ENCODE measurements at regions of chr5 and their contacts with region 1.

Region 1: GRCh38 chr5:81165493-81166119 is 67.5 kb upstream of the CKMT2 start:
- DNase-seq: peak; percentile 51
- H3K4me3 ChIP-seq: no peak overlapping the region
- H3K27ac ChIP-seq: no peak overlapping the region
- H3K4me1 ChIP-seq: no peaks in the 10 kb centered on the region
- H3K27me3 ChIP-seq: no peaks in the 10 kb centered on the region
- CTCF ChIP-seq: peak; percentile 68 to 78
- POLR2A ChIP-seq: no peak

Region 2: DNA sequence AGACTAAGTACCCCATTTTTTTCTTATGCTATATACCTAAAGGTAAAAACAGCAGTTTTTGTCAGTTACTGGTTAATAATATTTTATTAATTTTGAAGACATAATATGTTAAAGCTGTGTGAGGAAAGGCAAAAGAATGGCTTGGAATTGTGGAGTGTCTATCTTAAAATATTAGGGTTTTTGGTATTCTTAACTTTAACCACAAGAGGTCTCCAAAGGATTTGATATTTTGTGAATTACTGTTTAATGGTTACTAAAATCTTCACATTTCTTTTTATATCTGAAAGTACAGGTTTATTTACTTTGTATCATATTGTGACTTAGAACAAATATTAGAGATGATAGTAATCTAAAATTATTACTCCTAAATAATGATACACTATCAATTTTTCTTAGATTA is 478.8 kb before region 1 on chr5:
- CTCF ChIA-PET with region 1: interaction called, 46 read pairs
- POLR2A ChIA-PET with region 1: no interaction called
- dilution Hi-C with region 1: no loop called
- intact Hi-C with region 1: loop called (anchors 1 kb)
- DNase-seq: peak; percentile 27
- H3K4me3 ChIP-seq: no peak overlapping the region
- H3K27ac ChIP-seq: no peak overlapping the region
- H3K4me1 ChIP-seq: no peaks in the 10 kb centered on the region
- H3K27me3 ChIP-seq: no peaks in the 10 kb centered on the region
- CTCF ChIP-seq: peak; percentile 1 to 14
- POLR2A ChIP-seq: no peak

Region 3: DNA sequence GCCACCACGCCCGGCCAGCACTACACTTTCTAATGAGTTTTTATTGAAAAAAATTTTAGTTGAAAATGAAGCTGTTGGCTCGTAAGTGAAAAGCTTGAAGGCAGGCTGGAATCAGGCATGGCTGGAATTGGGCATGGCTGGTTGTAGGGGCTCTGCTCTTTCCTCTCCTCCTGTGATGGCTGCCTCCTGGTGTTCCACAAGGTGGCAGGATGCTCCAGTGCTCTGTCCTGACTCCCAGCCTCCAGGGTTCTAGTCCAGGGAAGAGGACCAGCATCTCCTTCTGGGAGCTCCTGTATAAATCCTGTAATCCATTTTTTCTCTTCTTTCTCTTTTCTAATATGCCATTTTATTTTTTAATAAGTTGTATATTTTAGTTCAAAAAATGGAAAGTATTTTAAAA is 453.7 kb before region 1 on chr5:
- CTCF ChIA-PET with region 1: interaction called, 3 read pairs
- POLR2A ChIA-PET with region 1: no interaction called
- dilution Hi-C with region 1: no loop called
- intact Hi-C with region 1: loop called (anchors 1 kb)
- DNase-seq: no peak
- H3K4me3 ChIP-seq: no peak overlapping the region
- H3K27ac ChIP-seq: no peak overlapping the region
- H3K4me1 ChIP-seq: peaks cover 6% of the 10 kb centered on the region
- H3K27me3 ChIP-seq: no peaks in the 10 kb centered on the region
- CTCF ChIP-seq: peak in 1 of 2 donors; percentile 57
- POLR2A ChIP-seq: no peak

Region 4: DNA sequence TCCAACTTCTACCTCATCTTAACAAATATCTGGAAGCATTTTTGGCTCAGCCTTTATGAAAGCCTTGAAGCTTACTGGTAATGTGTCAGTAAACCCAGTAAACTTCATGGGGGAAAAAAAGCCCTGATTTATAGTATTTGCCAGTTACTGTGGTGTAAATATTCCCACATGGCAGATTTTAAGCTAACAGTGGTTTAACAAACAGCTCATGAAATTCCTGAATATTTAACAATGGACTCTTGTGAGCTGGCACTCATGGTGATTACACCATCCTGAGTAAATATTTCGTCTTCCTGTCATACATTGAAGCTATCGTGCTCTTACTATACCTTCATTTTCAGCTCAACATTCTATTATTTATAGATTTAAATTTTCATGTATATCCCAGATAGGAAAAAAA is 285.3 kb after region 1 on chr5:
- CTCF ChIA-PET with region 1: no interaction called
- POLR2A ChIA-PET with region 1: no interaction called
- dilution Hi-C with region 1: no loop called
- intact Hi-C with region 1: no loop called
- DNase-seq: peak; percentile 24
- H3K4me3 ChIP-seq: no peak overlapping the region
- H3K27ac ChIP-seq: no peak overlapping the region
- H3K4me1 ChIP-seq: no peaks in the 10 kb centered on the region
- H3K27me3 ChIP-seq: no peaks in the 10 kb centered on the region
- CTCF ChIP-seq: no peak
- POLR2A ChIP-seq: no peak

Region 5: DNA sequence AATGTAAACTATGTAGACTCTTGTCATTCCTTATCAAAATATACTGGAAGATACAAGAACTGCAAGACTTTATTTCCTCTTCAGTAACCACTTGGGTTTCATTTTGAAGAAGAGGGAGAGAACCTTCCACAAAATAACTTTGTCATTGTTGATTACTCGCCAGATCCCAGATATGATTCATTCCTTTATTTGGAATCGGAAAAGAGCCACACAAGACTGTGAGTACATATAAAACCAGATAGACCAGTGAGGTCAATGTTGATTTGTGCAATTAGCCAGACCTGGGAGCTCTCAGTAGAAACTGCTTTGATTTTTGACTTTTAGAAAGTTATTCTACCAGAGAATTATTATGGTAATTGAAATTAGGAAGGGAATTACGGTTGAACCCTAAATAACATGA is 1765.5 kb after region 1 on chr5:
- CTCF ChIA-PET with region 1: no interaction called
- POLR2A ChIA-PET with region 1: no interaction called
- dilution Hi-C with region 1: no loop called
- intact Hi-C with region 1: no loop called
- DNase-seq: no peak
- H3K4me3 ChIP-seq: no peak overlapping the region
- H3K27ac ChIP-seq: no peak overlapping the region
- H3K4me1 ChIP-seq: no peaks in the 10 kb centered on the region
- H3K27me3 ChIP-seq: no peaks in the 10 kb centered on the region
- CTCF ChIP-seq: no peak
- POLR2A ChIP-seq: no peak